ENCODE measurements at regions of chr2 and their contacts with region 1.

Region 1: GRCh38 chr2:179995741-179996515 is 11.2 kb downstream of the CWC22 start:
- DNase-seq: no peak

Region 2: GRCh38 chr2:179857236-179857635 is 138.7 kb before region 1 on chr2:
- intact Hi-C with region 1: loop called (anchors 5 kb)
- DNase-seq: no peak

Measured in posterior cingulate gyrus (tissue), 11 donors.